Naive thymus-derived CD4-positive, alpha-beta T cell (primary cell): ENCODE measurements at regions of chr15 and their contacts with region 1.

Region 1: DNA sequence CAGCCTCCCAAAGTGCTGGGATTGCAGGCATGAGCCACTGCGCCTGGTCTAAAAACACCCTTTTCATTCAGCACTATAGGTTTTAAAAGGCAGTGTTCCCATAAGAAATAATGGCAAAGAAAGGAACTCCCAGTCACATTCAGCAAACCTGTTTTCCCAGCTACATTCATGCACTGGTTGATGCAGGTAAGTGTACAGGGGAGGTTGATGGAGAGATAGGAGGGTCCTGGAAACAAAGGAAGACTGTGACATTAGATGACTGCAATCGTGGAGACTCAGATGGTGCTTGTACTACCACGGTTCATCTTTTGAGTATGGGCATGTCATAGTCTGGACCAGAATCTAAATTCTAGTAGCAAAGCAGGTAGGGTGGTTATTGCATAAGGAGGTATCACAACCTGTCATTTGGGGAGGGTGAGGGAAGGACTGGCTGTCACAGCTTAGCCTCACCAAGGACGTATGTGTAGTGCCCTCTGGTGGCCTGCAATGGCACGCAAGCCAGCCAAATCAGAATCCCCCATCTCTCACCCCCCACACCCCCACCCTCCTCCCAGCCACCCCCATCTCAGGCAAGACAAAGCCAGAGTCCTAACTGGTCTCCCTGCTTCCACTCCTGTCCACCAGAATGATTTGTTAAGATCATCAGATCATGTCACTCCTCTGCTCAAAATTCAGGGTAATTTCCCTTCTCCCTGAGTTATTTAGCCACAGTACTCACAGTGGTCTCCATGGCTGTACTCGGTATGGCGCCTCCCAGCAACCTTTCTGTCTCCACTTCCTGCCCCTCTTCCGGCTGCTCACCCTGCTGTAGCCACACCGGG is 28.8 kb upstream of the UBL7 start:
- DNase-seq: peak; percentile 26 to 67 (median 51)
- ATAC-seq: peak; percentile 97
- H3K4me3 ChIP-seq: no peak overlapping the region
- H3K4me3 Mint-ChIP-seq: peak overlapping the region in 7 of 10 donors; percentile 7 to 40 (median 25)
- H3K27ac ChIP-seq: no peak overlapping the region
- H3K27ac Mint-ChIP-seq: peak overlapping the region in 6 of 9 donors; percentile 39 to 71 (median 62)
- H3K4me1 ChIP-seq: peaks cover 5 to 11% of the 10 kb centered on the region in 2 donors
- H3K4me1 Mint-ChIP-seq: peaks cover 7 to 20% (median 13%) of the 10 kb centered on the region in 7 donors
- H3K27me3 ChIP-seq: no peaks in the 10 kb centered on the region
- H3K27me3 Mint-ChIP-seq: no peaks in the 10 kb centered on the region

Region 2: DNA sequence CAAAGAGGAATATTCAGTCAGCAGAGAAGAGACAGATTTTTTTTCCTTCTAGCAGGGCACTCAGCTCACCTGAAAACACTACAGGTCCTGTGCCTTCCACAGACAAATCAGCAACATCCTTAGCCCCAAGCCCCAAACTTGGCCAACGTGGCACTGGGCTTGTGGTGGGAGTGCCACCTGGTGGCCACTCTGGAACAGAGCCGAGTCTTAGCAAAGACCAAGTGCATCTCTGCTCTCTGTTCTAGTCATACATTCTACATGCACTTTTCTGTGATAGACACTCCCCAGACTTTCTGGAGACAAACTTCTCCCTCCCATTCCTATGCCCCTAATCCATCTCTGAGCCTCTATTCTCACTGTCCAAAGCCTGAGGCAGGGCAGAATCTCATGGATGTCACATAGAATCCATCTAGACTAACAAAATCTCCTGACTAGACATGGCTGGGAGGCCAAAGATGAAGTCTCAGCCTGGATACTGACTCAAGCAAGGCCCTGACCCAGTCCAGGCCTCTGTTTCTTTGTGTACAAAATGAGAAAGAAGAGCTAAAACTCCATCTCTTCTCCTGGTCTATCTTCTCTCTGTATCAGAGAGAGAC is 50.9 kb before region 1 on chr15:
- CTCF ChIA-PET with region 1: no interaction called
- POLR2A ChIA-PET with region 1: no interaction called
- intact Hi-C with region 1: loop called (anchors 1 kb)
- DNase-seq: peak; percentile 52 to 76 (median 72)
- ATAC-seq: peak; percentile 84
- H3K4me3 ChIP-seq: no peak overlapping the region
- H3K4me3 Mint-ChIP-seq: no peak overlapping the region
- H3K27ac ChIP-seq: no peak overlapping the region
- H3K27ac Mint-ChIP-seq: peak overlapping the region in 3 of 9 donors; percentile 11 to 55 (median 43)
- H3K4me1 ChIP-seq: peaks cover 6 to 11% of the 10 kb centered on the region in 2 donors
- H3K4me1 Mint-ChIP-seq: peaks cover 7 to 30% (median 15%) of the 10 kb centered on the region in 7 donors
- H3K27me3 ChIP-seq: no peaks in the 10 kb centered on the region
- H3K27me3 Mint-ChIP-seq: no peaks in the 10 kb centered on the region

Region 3: DNA sequence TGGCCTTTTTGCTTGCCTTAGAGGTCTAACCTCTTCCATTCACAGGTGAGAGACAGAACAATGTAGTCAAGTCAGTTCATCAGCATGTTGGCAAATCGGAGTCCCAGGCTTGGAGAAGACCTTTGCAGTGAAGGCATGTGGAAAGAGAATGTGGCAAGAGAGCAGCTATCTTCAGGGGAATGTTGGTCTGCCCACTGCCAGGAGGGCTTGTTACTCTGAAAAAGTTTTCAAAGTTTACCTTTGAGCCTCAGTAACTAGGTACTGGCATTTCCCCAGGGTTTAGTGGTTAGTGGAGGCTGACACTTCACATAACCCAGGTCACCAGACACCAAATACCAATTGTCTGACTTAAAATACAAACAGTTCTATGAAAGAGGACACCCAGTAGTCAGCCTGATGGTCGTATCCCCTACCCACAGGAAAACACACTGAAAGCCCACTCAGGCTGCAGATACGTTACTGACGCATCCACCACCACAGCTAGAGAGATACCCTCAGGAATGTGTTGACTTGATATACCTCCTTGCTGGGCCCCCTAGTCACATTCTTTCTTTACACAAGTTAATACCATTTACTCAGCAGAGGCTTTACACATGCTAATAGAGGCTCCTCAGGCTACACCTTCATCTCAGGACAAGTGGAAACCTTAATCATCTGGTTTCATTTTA is 41.5 kb after region 1 on chr15:
- CTCF ChIA-PET with region 1: no interaction called
- POLR2A ChIA-PET with region 1: no interaction called
- intact Hi-C with region 1: no loop called
- DNase-seq: no peak
- ATAC-seq: no peak
- H3K4me3 ChIP-seq: no peak overlapping the region
- H3K4me3 Mint-ChIP-seq: no peak overlapping the region
- H3K27ac ChIP-seq: no peak overlapping the region
- H3K27ac Mint-ChIP-seq: no peak overlapping the region
- H3K4me1 ChIP-seq: no peaks in the 10 kb centered on the region
- H3K4me1 Mint-ChIP-seq: peaks cover 0 to 13% (median 0%) of the 10 kb centered on the region in 7 donors
- H3K27me3 ChIP-seq: no peaks in the 10 kb centered on the region
- H3K27me3 Mint-ChIP-seq: peaks cover 0 to 3% (median 0%) of the 10 kb centered on the region in 5 donors

Region 4: DNA sequence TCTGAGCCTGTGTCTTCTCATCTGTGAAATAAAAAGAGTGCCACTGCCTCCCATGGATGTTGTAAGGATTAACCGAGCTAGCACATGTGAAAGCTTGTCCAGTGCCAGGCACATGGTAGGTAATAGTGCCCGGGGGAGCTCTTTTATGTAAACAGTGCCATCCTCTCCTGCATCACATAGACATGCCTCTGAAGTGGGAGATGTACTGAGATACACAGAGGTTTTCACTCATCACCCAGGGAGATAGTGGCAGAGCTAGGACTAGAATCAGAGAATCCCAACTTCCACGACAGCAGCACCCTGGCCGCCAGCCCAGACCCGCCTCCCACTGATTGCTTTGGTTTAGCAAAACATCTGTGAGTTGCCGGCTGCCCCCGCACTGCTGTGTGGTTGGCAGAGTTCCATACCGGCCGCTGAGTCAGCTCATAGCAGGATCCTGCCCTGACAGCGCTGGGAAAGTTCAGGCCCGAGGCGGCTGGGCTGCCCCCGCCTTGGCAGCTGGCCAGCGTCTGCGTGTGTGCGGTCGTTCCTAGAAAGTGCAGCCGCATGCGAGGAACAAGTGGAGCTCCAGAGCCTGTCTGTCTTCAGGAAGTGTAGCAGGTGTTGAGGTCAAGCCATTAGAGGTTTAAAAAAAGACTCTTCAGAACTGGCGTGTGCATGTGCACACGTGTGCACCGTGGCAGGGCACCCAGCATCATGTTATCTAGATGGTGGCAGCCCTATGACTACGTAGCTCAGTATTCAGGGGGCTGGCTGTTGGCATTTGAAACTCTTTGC is 56.3 kb after region 1 on chr15:
- CTCF ChIA-PET with region 1: no interaction called
- POLR2A ChIA-PET with region 1: interaction called, 3 read pairs
- intact Hi-C with region 1: loop called in 1 of 2 experiments (anchors 1 kb)
- DNase-seq: peak; percentile 51 to 91 (median 57)
- ATAC-seq: peak; percentile 73
- H3K4me3 ChIP-seq: no peak overlapping the region
- H3K4me3 Mint-ChIP-seq: peak overlapping the region; percentile 55 to 84 (median 73)
- H3K27ac ChIP-seq: peak overlapping the region; percentile 58
- H3K27ac Mint-ChIP-seq: peak overlapping the region; percentile 7 to 90 (median 74)
- H3K4me1 ChIP-seq: peaks cover 36 to 51% of the 10 kb centered on the region in 2 donors
- H3K4me1 Mint-ChIP-seq: peaks cover 58 to 87% (median 77%) of the 10 kb centered on the region in 7 donors
- H3K27me3 ChIP-seq: no peaks in the 10 kb centered on the region
- H3K27me3 Mint-ChIP-seq: no peaks in the 10 kb centered on the region